ENCODE measurements at regions of chr6 and their contacts with region 1.

Region 1: GRCh38 chr6:34506718-34507117 is 40.8 kb downstream of the PACSIN1 start:
- DNase-seq: peak; percentile 23

Region 2: DNA sequence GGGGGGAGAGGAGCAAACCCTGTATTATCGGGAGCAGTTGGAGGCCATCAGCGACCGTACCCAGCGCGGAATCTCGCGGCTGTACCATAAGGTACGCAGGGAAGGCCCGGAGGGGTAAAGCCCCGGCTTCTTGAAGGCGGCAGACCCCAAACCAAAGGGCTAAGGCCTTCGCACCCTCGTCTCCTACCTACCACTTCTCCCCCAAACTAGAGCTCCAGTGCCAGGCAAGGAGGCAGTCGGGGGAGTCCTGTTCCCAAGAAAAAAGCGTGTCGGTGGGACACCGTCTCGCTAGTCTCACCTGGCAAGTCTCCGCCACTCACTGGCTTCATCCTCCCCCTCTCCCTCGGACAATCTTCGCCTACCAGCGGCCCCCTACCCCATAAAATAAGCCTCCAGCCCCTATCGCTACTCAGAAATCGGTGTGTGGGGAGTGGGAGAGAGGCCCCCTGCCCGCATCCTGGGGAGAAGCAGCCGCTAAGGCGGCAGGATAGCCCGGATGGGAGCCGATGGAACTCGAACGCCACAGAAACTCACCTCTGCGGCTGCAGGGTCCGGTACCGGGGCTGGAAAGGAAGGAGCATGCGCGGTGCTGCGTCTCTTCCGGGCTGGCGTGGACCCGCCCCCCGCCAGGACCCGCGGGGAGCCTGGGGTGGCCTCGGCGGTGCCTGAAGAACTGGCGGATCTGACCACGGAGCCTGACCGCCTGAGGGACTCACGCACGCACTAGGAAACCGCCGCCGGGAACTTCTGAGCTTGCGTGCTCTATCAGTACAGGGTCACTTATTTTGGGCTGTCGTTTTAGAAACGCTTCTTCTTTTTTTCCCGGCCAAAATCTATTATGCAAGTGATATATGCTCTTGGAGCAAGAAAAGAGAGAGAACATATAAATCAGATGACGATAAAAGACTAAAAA is 81.0 kb before region 1 on chr6 and contains the start of gene RPS10:
- intact Hi-C with region 1: loop called in 1 of 2 experiments (anchors 2 kb)
- DNase-seq: peak; percentile 98
- total RNA-seq, gene RPS10: 962 to 1,039 TPM